ENCODE measurements at regions of chr22 and their contacts with region 1.

Region 1: DNA sequence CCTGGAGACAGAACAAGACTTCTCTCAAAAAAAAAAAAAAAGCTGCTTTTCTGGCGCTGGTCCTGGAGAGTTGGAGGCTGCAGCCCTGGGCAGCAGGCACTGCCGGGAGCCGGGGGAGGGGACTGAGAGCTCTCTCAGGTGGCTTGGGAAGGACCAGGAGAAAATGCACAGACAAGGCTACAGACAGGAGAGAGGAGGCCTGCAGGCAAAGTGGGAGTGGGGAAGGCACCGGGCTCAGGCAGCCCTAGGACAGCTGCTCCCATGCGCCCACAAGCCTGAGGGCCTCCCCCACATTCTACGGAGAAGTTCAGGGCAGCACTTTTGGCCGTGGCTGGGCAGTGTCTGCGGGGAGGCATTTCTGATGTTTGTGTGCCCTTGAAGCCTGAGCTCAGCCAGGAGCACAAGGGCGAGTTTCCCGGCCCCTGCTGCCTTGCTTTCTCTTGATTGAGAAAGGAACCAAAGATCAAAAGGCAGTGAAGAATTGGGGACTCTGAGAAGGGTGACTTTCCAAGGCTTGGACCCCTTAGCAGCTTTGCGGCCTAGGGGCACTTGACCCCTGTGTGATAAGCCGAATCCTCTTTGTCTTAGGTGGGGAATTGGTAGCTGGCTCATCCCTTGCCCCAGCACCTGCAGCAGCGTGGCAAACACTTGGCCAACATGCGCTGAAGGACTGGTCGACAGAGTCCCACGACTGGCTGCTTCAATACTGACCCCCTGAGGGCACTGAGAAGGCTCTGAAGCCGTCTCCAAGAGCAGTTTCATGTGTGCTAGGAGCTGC is 35.3 kb downstream of the PPM1F start:
- DNase-seq: no peak
- H3K4me3 ChIP-seq: no peak overlapping the region
- H3K27ac ChIP-seq: no peak overlapping the region
- H3K4me1 ChIP-seq: no peaks in the 10 kb centered on the region
- H3K27me3 ChIP-seq: no peaks in the 10 kb centered on the region
- CTCF ChIP-seq: no peak
- POLR2A ChIP-seq: no peak

Region 2: GRCh38 chr22:21938071-21938822 is 20.9 kb after region 1 on chr22:
- intact Hi-C with region 1: no loop called
- DNase-seq: peak; percentile 89 to 93
- H3K4me3 ChIP-seq: peak overlapping the region; percentile 58 to 71 (median 58)
- H3K27ac ChIP-seq: peak overlapping the region; percentile 89 to 93
- H3K4me1 ChIP-seq: peaks cover 9 to 19% of the 10 kb centered on the region in 2 donors
- H3K27me3 ChIP-seq: no peaks in the 10 kb centered on the region
- CTCF ChIP-seq: peak; percentile 99 to 100 (median 99)
- POLR2A ChIP-seq: no peak

Region 3: DNA sequence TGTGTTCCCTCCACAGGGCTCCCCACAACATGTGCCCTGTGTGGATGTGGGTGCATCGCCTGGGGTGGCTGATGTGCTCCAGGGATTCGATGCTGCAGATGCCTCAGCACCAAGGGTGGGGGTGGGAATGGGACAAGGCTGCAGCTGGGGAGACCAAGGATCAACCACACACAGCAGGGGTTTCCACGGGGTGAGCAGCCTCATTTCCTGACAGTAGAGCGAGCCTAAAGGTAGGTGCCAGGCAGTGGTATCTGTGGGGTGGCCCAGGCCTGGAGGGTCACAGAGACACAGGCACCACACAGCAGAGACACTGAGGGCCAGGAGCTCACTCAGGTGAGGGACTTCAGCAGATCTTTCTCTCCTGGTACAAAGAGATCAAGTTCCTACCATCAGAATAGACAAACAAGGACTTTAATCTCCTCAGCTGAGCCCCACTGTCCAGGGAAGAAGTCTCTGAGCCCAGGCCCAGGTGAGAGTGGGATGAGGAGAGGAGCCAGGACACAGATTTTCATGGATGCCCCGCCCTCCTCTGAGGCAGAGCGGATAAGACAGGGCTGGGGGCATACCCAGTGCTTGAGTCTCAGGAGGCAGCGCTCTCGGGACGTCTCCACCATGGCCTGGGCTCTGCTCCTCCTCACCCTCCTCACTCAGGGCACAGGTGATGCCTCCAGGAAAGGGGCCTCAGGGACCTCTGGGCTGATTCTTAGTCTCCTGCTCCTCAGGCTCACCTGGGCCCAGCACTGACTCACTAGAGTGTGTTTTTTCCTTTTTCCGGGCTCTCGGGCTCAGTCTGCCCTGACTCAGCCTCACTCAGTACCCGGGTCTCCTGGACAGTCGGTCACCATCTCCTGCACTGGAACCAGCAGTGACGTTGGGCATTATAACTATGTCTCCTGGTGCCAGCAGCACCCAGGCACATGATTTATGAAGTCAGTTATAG is 746.8 kb after region 1 on chr22:
- intact Hi-C with region 1: loop called (anchors 5 kb)
- DNase-seq: no peak
- H3K4me3 ChIP-seq: no peak overlapping the region
- H3K27ac ChIP-seq: no peak overlapping the region
- H3K4me1 ChIP-seq: no peaks in the 10 kb centered on the region
- H3K27me3 ChIP-seq: no peaks in the 10 kb centered on the region
- CTCF ChIP-seq: no peak
- POLR2A ChIP-seq: no peak

Measured in breast epithelium (tissue), 4 donors.